Activated naive CD4-positive, alpha-beta T cell treated with anti-CD3 and anti-CD28 coated beads for 36 hours (primary cell): ENCODE measurements at regions of chr5 and their contacts with region 1.

Region 1: GRCh38 chr5:31581498-31582099 is 49.5 kb downstream of the C5orf22 start:
- DNase-seq: peak; percentile 8
- H3K4me3 Mint-ChIP-seq: no peak overlapping the region
- H3K27ac Mint-ChIP-seq: no peak overlapping the region
- H3K4me1 Mint-ChIP-seq: no peaks in the 10 kb centered on the region
- H3K27me3 Mint-ChIP-seq: peaks cover 9% of the 10 kb centered on the region

Region 2: GRCh38 chr5:31469886-31470285 is 111.7 kb before region 1 on chr5:
- CTCF ChIA-PET with region 1: no interaction called
- intact Hi-C with region 1: no loop called
- DNase-seq: no peak
- H3K4me3 Mint-ChIP-seq: no peak overlapping the region
- H3K27ac Mint-ChIP-seq: no peak overlapping the region
- H3K4me1 Mint-ChIP-seq: no peaks in the 10 kb centered on the region
- H3K27me3 Mint-ChIP-seq: no peaks in the 10 kb centered on the region

Region 3: GRCh38 chr5:31809050-31809870 is 227.7 kb after region 1 on chr5:
- CTCF ChIA-PET with region 1: interaction called, 4 read pairs
- intact Hi-C with region 1: loop called (anchors 1 kb)
- DNase-seq: peak; percentile 58
- H3K4me3 Mint-ChIP-seq: no peak overlapping the region
- H3K27ac Mint-ChIP-seq: no peak overlapping the region
- H3K4me1 Mint-ChIP-seq: no peaks in the 10 kb centered on the region
- H3K27me3 Mint-ChIP-seq: no peaks in the 10 kb centered on the region

Region 4: GRCh38 chr5:31825518-31826068 is 244.0 kb after region 1 on chr5:
- CTCF ChIA-PET with region 1: no interaction called
- intact Hi-C with region 1: loop called (anchors 1 kb)
- DNase-seq: peak; percentile 73
- H3K4me3 Mint-ChIP-seq: no peak overlapping the region
- H3K27ac Mint-ChIP-seq: no peak overlapping the region
- H3K4me1 Mint-ChIP-seq: peaks cover 1% of the 10 kb centered on the region
- H3K27me3 Mint-ChIP-seq: no peaks in the 10 kb centered on the region